Left colon (tissue), 2 donors: ENCODE measurements at regions of chr1 and their contacts with region 1.

Region 1: DNA sequence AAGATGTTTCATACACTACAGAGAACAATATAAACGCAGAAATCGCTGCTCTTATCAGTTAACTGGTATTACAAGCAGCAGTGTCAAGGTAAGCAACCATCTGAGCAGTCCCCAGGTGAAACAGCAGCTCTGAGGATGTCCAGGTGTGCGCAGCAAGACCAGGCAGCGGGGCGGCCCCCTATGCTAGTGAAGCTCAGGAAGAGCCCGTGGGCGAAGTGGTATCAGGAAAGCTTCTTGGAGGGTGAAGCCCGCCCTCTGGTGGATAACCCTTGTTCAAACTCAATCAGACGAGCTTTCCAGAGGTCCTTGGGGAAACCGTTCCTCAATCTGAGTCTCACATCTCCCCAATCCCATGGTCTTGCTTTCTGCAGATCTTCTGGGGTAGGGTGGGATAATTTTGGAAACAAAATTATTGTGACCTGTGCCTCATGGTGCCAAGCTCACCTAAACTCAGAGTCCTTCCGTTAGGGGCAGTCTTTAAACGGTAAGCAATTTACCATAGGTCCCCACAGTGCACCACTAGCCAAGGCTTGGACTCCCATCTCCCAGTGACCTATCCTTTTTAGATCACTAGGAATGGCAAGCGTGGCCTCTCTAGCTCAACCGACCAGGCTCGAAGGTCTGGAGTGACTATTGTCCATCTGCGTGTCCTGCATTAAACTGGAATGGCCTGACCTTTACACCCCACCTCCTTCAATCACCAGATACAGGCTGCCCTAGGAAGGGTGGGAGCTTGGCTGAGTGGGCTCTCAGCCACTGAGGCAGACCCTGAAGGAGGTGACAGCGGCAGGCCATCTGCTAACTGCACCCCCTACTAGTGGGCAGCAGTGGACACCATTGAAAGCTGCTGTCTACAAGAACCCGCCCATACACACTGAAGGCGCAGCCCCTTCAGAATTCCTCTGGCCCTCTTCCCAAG is 13.6 kb upstream of the FAM110D start:
- DNase-seq: peak; percentile 77 to 88
- ATAC-seq: peak; percentile 99

Region 2: DNA sequence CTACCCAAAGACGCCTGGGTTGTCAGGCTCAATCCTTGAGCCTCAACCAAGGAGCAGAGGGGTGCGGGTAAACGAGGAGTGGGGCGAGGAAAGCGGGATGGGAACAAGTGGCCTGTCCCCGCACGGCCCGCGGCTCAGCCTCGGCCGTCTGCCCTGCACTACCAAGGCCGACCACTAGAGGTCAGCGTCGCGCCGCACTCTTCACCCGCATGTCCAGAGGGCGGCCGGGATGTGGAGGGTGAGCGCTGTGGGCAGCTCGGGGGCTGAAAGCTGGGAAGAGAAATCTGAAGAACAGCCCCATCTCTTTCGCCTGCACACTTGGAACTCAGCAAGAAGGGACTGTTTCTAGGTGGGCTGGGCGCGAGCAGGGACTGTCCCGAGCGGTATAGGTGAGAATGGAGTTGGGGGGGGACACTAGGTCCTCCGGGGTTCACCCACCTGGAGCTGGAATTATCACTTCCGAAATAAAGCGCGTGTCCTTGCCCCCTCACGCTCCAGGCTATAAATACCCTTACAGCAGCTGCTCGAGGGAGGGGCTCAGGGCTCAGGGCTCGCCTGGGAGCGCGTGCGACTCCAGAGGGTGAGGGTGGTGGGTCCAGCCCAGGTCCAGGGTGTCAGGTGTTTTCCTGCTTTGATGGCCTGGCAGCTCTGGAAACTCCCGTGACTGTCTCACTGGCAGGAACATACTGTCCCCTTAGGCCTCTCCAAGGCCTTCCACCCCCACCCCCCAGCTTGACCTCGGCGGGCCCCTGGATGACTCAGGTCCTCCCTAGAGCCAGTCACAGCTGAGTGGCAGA is 109.1 kb before region 1 on chr1:
- intact Hi-C with region 1: loop called in 1 of 2 experiments (anchors 5 kb)
- DNase-seq: peak; percentile 57 to 87
- ATAC-seq: peak; percentile 89

Region 3: GRCh38 chr1:26102526-26102925 is 42.8 kb before region 1 on chr1:
- intact Hi-C with region 1: loop called (anchors 2 to 5 kb)
- DNase-seq: no peak
- ATAC-seq: no peak